Activated CD4-positive, alpha-beta T cell treated with anti-CD3 and anti-CD28 coated beads, Interleukin-2, amount 10 ng/mL, durations not matched to agents 24 days and 14 days (primary cell): ENCODE measurements at regions of chr13 and their contacts with region 1.

Region 1: DNA sequence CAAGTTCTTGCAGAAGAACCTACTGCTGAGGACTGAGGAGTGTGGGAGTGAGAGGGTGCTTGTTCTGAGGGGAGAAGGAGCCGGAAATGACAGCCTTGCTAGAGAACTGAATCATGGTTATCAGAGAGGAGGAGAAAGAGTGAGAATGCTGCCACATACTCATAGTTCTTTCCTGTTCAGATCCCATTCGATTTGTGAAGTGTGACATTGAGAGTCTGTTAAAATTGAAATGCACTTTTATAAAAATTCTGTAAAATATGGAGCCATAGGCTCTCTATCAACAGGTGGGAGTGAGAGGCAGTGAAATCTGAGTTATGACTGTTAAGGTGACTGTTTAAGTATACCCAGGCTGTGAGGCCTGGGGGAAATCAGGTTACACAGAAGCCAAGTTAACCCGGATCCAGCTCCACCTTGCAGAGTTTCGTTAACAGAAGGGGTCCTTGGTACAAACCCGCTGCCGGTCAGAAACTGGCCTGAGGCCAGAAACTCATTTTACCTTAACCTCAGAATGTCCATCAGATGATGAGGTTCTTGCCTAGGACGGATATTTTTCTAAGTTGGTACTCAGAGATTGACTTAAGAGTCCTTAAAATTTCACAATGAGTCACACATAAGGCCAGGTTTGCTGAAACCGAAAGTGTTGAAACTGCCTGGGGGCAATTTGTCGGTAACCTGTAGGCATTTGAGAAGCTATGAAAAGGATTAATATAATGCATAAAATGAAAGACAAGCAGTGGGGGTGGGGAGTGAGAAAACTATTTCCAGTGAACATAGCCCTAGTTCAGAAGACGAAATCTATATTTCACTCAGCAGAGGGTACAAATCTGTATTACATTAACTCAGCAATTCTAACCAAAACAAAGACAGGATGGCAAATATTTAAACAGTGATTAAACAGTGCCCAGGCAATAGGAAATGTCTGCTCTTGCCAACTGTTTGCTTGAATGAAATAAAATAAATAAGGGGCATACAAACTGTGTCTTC is 350.5 kb downstream of the KCNRG start:
- DNase-seq: peak; percentile 86
- H3K4me3 Mint-ChIP-seq: peak overlapping the region; percentile 68
- H3K27ac Mint-ChIP-seq: peak overlapping the region; percentile 84
- H3K4me1 Mint-ChIP-seq: peaks cover 43% of the 10 kb centered on the region
- H3K27me3 Mint-ChIP-seq: peaks cover 39% of the 10 kb centered on the region

Region 2: DNA sequence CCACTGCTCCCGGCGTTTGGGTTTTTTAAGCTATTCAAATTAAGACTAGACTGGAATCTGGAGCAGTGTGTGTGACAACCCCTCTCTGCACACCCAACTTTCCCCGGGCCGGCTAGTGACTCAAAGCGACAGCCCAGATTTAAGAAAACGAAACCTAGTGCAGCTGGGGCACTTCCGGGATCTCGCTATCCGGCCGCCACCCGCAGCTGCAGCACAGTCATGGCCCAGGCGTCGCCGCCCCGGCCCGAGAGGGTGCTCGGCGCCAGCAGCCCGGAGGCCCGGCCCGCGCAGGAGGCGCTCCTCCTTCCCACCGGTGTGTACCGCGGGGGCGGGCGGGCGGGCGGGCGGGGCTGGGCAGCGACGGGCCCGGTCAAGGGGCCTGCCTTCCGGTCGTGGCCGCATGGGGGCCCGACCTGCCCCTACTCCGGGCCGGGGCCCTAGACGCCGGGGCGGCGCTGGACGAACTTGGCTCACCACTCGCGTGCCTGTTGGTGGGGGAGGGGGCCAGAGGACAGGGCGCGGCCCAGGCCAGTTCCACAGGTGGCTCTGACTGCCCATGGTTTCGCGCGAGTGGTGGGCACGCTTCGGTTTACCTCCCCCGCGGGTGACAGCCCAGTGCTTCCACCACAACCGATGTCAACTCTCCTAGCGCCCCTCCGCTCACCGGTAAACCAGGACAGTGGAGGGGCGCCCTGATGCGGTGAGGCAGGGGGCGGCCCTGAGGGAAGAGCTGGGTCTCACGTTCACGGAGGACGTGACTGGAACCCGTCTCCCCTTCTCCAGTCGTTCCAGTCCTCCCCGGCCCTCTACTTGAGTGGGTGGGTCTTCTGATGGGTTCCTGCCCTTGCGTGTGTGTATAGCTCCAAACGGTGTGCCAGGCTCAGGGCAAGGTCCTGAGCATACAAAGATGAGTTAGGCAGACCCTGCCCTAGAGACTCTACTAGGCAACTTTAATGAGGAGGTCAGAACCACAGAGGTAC is 869.6 kb before region 1 on chr13 and contains the start of gene PHF11:
- intact Hi-C with region 1: loop called (anchors 5 kb)
- DNase-seq: peak; percentile 96
- H3K4me3 Mint-ChIP-seq: peak within 1 kb of the TSS; percentile 95
- H3K27ac Mint-ChIP-seq: peak within 1 kb of the TSS; percentile 99
- H3K4me1 Mint-ChIP-seq: peaks cover 51% of the 10 kb centered on the region
- H3K27me3 Mint-ChIP-seq: no peaks in the 10 kb centered on the region
- total RNA-seq, gene PHF11: 56.8 and 60.8 TPM in 2 replicates

Region 3: DNA sequence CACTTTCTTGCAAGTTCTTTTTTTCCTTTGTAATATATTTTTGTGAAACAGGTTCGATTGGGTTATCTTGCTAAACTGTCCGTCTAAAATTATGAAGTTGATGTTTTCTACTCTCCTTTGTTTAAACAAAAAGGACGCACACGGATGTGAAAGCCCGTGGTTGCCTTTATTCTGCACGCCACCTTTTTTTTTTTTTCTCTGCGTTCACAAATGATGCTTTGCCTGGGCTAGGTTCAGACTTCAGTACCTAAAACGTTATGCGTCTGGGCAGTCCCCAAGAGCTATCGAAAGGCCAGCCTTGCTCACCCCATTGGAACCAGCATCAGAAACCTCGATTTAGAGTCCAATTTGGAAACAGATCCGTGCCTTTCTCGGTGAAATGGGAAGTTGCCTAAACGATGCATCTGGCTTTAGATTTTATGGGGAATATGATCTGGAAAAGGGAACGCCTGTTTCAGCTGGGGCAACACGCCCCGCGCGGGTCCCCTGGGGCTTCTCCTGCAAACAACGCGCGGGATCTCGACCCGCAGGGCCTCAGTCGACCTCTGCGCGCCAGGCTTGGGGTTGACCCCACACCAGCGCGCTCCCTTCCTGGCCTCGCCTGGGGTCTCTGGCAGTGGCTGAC is 236.5 kb before region 1 on chr13:
- intact Hi-C with region 1: loop called (anchors 1 kb)
- DNase-seq: peak; percentile 80
- H3K4me3 Mint-ChIP-seq: peak overlapping the region; percentile 77
- H3K27ac Mint-ChIP-seq: peak overlapping the region; percentile 91
- H3K4me1 Mint-ChIP-seq: peaks cover 52% of the 10 kb centered on the region
- H3K27me3 Mint-ChIP-seq: peaks cover 40% of the 10 kb centered on the region

Region 4: DNA sequence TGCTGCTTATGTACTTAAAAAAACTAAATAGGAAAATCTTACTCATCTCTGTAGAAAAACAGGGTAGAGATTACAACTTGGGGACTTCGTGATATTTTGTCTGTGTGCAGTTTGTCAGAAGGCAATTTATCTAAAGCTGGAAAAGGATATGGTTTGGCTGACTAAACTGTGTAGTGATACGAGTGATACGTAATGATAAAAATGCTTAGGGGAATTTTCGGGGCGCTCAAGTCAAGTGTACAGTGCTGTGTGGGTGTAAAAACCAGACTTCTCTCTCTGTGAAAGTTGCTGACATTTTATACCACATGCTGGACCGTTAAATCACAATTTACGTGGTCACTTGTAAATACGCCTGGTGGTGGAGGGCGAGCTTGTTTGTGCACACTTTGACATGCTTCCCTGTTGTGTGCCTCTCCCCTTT is 128.8 kb before region 1 on chr13:
- intact Hi-C with region 1: loop called (anchors 1 kb)
- DNase-seq: peak; percentile 83
- H3K4me3 Mint-ChIP-seq: peak overlapping the region; percentile 23
- H3K27ac Mint-ChIP-seq: peak overlapping the region; percentile 84
- H3K4me1 Mint-ChIP-seq: peaks cover 34% of the 10 kb centered on the region
- H3K27me3 Mint-ChIP-seq: peaks cover 29% of the 10 kb centered on the region

Region 5: GRCh38 chr13:50428183-50428877 is 62.6 kb after region 1 on chr13:
- intact Hi-C with region 1: loop called (anchors 2 kb)
- DNase-seq: peak; percentile 54
- H3K4me3 Mint-ChIP-seq: no peak overlapping the region
- H3K27ac Mint-ChIP-seq: peak overlapping the region; percentile 10
- H3K4me1 Mint-ChIP-seq: peaks cover 7% of the 10 kb centered on the region
- H3K27me3 Mint-ChIP-seq: peaks cover under 1% of the 10 kb centered on the region

Region 6: GRCh38 chr13:50485979-50486935 is 120.6 kb after region 1 on chr13:
- intact Hi-C with region 1: no loop called
- DNase-seq: no peak
- H3K4me3 Mint-ChIP-seq: no peak overlapping the region
- H3K27ac Mint-ChIP-seq: no peak overlapping the region
- H3K4me1 Mint-ChIP-seq: no peaks in the 10 kb centered on the region
- H3K27me3 Mint-ChIP-seq: peaks cover 39% of the 10 kb centered on the region

Region 7: GRCh38 chr13:50911937-50912795 is 546.5 kb after region 1 on chr13:
- intact Hi-C with region 1: loop called (anchors 1 kb)
- DNase-seq: peak; percentile 98
- H3K4me3 Mint-ChIP-seq: peak overlapping the region; percentile 98
- H3K27ac Mint-ChIP-seq: peak overlapping the region; percentile 99
- H3K4me1 Mint-ChIP-seq: peaks cover 52% of the 10 kb centered on the region
- H3K27me3 Mint-ChIP-seq: no peaks in the 10 kb centered on the region